Mammary epithelial cell (primary cell): ENCODE measurements at regions of chr7 and their contacts with region 1.

Region 1: DNA sequence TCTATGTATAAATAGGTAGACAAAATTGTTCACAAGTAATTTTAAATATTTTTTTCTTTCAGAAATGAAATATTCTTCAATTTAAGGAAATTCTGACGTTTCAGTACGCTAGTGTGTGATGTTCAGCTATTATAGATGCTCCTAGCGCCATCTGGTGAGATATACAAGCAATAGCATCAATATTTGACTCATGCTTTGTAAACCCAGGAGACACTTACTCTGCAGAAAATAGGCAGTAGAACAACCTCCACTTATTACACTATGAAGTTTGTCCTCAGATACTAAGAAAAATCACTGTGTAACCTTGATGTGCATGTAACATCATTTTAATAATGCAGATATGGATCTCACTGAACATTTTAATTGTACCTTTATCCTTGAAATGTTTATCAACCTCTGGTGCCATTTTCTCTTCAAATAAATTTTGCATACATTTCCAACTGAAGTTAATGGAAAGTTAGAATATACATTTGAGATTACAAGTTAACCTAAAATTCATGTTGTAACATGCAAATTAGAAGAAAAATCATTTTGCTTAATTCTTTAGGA is 151.5 kb upstream of the FAM3C start:
- DNase-seq: peak; percentile 50
- H3K4me3 ChIP-seq: no peak overlapping the region
- H3K27ac ChIP-seq: no peak overlapping the region
- H3K4me1 ChIP-seq: peaks cover 15% of the 10 kb centered on the region
- H3K27me3 ChIP-seq: no peaks in the 10 kb centered on the region
- CTCF ChIP-seq: peak; percentile 68 to 78

Region 2: GRCh38 chr7:121138262-121138933 is 409.2 kb before region 1 on chr7:
- CTCF ChIA-PET with region 1: no interaction called
- dilution Hi-C with region 1: no loop called
- in situ Hi-C with region 1: loop called (anchors 25 kb)
- intact Hi-C with region 1: no loop called
- DNase-seq: peak; percentile 64
- H3K4me3 ChIP-seq: no peak overlapping the region
- H3K27ac ChIP-seq: no peak overlapping the region
- H3K4me1 ChIP-seq: peaks cover 5% of the 10 kb centered on the region
- H3K27me3 ChIP-seq: no peaks in the 10 kb centered on the region
- CTCF ChIP-seq: no peak

Region 3: DNA sequence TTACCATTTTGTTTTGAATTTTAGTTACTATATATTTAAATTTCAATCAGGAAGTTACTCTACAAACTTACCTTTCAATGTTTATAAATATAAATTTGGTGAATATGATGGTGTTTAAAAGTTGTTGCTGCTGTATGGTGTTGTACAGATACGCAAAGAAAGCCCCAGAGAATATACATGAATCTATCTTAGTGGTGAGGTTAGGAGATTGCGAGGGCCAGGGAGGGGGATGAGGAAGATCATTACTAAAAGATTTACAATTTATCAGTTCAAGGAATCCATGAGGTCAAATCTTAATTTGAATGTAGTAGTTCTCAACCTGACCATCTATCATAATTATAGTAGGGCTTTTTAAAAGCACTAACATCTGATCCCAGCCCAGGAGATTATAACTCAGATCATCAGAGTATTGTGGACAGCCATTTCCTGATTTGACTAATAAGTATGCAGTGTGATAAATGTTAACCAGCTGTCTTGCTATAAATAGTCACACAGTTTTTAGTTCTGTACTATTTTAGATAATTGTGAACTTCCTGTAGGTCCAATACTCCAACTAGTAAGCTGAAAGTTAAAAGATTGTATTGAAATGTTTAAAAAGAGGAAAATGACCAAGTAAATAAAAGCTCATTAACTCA is 175.1 kb before region 1 on chr7:
- CTCF ChIA-PET with region 1: interaction called, 6 read pairs
- dilution Hi-C with region 1: loop called (anchors 25 kb)
- in situ Hi-C with region 1: loop called (anchors 5 kb)
- intact Hi-C with region 1: loop called (anchors 1 kb)
- DNase-seq: no peak
- H3K4me3 ChIP-seq: no peak overlapping the region
- H3K27ac ChIP-seq: no peak overlapping the region
- H3K4me1 ChIP-seq: peaks cover 4% of the 10 kb centered on the region
- H3K27me3 ChIP-seq: no peaks in the 10 kb centered on the region
- CTCF ChIP-seq: no peak

Region 4: GRCh38 chr7:121480058-121480457 is 67.6 kb before region 1 on chr7:
- CTCF ChIA-PET with region 1: no interaction called
- dilution Hi-C with region 1: loop called (anchors 5 kb)
- in situ Hi-C with region 1: no loop called
- intact Hi-C with region 1: loop called (anchors 5 kb)
- DNase-seq: peak; percentile 27
- H3K4me3 ChIP-seq: no peak overlapping the region
- H3K27ac ChIP-seq: no peak overlapping the region
- H3K4me1 ChIP-seq: peaks cover 9% of the 10 kb centered on the region
- H3K27me3 ChIP-seq: no peaks in the 10 kb centered on the region
- CTCF ChIP-seq: no peak

Region 5: DNA sequence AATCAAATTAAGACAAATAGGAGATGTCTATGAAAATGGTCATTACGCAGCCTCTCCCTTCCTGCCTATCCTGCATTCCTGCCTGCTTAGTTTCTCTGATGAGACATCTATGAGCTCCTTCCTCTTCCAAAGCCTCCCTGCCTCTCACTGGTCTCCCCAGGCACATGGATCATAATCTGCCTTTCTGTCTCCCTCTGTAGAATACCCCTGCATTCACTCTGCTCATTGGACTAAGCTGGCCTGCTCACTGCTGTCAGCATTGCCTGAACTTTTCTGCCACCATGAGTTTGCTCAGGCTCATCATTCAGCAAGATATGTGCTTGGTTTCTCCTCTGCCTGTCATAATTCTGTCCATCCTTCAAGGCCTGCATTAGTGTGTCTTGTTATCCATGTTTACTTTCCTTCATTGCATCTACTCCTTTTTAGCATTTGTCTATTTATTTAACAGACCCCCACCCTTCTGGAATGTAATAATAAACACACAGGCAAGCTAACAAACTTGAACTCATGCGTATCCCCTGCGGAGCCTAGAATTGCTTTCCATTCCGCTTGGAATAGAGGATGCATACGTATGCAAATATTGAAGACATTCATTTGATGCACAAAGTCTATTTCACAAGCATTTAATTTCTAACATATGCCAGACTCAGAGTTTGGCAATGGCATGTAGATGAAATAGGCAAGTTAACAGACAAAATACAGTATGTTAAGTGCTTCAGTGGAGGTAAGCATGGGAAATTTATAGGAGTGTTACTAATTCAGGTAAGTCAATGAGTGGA is 413.7 kb after region 1 on chr7:
- CTCF ChIA-PET with region 1: interaction called, 5 read pairs
- dilution Hi-C with region 1: no loop called
- in situ Hi-C with region 1: no loop called
- intact Hi-C with region 1: loop called (anchors 2 kb)
- DNase-seq: peak; percentile 93
- H3K4me3 ChIP-seq: no peak overlapping the region
- H3K27ac ChIP-seq: peak overlapping the region; percentile 99
- H3K4me1 ChIP-seq: peaks cover 10% of the 10 kb centered on the region
- H3K27me3 ChIP-seq: no peaks in the 10 kb centered on the region
- CTCF ChIP-seq: peak; percentile 25 to 47